ENCODE measurements at regions of chr18 and their contacts with region 1.

Region 1: GRCh38 chr18:63994783-63995399 is 25.0 kb downstream of the SERPINB8 start:
- DNase-seq: peak; percentile 40
- H3K4me3 ChIP-seq: no peak overlapping the region
- H3K27ac ChIP-seq: no peak overlapping the region
- H3K4me1 ChIP-seq: no peaks in the 10 kb centered on the region
- H3K27me3 ChIP-seq: no peaks in the 10 kb centered on the region
- CTCF ChIP-seq: peak; percentile 67 to 93 (median 87)
- EP300 ChIP-seq: no peak
- POLR2A ChIP-seq: no peak

Region 2: DNA sequence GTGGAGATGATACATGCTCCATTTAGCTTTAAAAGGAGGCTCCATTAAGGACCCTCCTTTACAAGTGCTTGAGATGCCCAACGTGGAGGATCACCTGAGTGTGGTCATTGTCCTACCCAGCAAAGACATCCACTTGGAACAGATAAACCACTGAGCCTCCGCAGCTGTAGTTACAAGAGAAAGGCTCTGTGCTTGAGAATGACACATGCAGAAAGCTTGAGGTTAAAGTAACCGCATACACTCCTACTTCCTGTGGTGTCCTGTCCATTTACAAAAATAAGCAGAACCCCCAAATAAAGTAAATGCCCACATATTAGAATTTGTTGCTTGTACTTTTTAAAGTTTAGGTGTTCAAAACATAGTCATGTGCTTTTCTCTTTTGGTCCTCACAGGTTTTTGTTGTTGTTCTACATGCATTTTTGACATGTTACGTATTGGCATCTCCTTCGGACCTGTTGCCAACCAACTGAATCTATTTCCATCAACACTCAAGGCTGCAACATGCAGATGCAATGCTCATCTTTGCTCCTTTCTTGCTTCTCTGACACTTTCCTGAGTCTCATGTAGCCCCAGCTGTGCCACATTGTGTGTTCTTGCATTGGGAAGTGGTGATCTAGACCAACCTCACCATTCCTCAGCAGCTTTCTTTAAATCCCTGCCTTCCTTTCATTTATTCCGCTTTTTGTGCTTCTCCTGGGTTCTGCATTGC is 163.7 kb before region 1 on chr18:
- in situ Hi-C with region 1: no loop called
- intact Hi-C with region 1: no loop called
- DNase-seq: no peak
- H3K4me3 ChIP-seq: no peak overlapping the region
- H3K27ac ChIP-seq: no peak overlapping the region
- H3K4me1 ChIP-seq: no peaks in the 10 kb centered on the region
- H3K27me3 ChIP-seq: no peaks in the 10 kb centered on the region
- CTCF ChIP-seq: no peak
- EP300 ChIP-seq: no peak
- POLR2A ChIP-seq: no peak

Region 3: GRCh38 chr18:63949068-63949737 is 45.7 kb before region 1 on chr18 and contains the start of gene HMSD:
- in situ Hi-C with region 1: no loop called
- intact Hi-C with region 1: loop called (anchors 10 kb)
- DNase-seq: peak; percentile 69
- H3K4me3 ChIP-seq: peak within 1 kb of the TSS in 3 of 4 donors; percentile 3 to 33 (median 26)
- H3K27ac ChIP-seq: no peak within 1 kb of the TSS
- H3K4me1 ChIP-seq: peaks cover 0 to 13% (median 4%) of the 10 kb centered on the region in 4 donors
- H3K27me3 ChIP-seq: peaks cover 18% of the 10 kb centered on the region
- CTCF ChIP-seq: peak; percentile 25 to 52 (median 49)
- EP300 ChIP-seq: no peak
- POLR2A ChIP-seq: no peak
- total RNA-seq, gene HMSD: 0.64 TPM in 1 of 4 donors, not detected in the others

Region 4: DNA sequence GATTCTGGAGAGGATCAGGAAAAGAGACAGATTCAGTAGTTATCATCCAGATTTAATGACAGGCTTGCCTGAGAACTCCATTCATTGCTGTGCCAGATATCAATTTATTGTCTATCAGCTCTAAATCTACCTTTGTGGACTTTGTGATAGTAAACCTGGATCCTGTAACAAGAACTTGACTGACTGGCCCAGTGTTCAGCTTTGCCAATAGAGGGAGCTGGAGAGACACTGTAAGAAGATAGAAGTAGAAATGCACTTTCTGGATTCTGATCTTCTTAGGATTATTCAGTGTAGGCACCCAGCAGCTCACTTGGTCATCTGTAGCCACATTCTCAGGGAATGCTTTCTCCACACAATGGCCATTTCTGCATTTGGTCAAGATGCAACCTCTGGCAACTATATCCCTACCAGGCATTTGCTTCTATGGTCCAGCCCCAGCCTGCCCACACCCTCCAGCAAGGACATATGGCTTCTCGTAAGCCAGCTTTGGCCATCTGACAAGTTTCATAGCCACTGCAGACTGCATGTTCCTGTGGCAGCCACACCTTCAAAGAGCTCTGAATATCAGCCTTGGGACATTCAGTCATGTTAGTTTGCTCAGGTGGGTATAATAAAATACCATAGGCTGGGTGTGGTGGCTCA is 31.2 kb before region 1 on chr18:
- in situ Hi-C with region 1: no loop called
- intact Hi-C with region 1: loop called (anchors 5 kb)
- DNase-seq: peak; percentile 66
- H3K4me3 ChIP-seq: no peak overlapping the region
- H3K27ac ChIP-seq: peak overlapping the region; percentile 61 to 75 (median 69)
- H3K4me1 ChIP-seq: peaks cover 0 to 15% (median 4%) of the 10 kb centered on the region in 4 donors
- H3K27me3 ChIP-seq: no peaks in the 10 kb centered on the region
- CTCF ChIP-seq: peak; percentile 79 to 85 (median 81)
- EP300 ChIP-seq: no peak
- POLR2A ChIP-seq: no peak

Measured in transverse colon (tissue), 4 donors.